Gastrocnemius medialis (tissue), 4 donors: ENCODE measurements at regions of chr1 and their contacts with region 1.

Region 1: DNA sequence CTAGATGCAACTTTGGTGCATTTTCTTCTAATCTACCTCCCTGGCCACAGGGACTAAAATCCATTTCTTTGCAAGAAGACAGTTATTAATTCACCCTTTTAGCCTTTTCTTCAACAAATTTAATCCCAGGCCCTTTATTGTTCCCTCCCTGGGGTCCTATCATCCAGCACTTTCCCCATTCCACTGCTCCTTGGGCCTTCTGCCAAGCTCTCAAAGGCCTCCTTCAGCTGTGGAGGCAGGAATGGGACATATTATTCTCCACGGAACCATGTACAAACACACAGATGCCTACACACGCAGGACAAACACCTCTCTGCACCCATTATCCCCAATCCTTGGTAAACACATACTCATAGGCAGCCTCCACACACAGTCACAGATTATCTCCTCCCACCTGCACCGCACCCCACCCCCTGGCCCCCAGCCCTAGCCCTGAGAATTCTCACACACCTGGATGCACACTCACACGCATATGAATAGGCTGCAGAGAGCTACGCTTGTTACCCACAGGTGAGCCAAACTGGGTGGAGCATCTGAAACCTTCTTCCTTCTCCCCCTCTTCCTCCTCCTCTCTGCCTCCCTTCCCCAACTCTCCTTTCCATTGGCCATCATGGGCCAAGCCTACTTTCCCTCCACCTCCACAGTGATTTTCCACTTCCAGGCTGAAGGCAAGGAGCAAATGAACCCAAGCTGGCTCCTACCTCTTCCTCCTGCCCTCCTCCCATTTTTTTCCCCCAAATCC is 11.7 kb downstream of the TAGLN2 start:
- DNase-seq: no peak
- ATAC-seq: no peak
- H3K4me3 ChIP-seq: no peak overlapping the region
- H3K27ac ChIP-seq: no peak overlapping the region
- H3K4me1 ChIP-seq: peaks cover 0 to 16% of the 10 kb centered on the region in 2 donors
- H3K27me3 ChIP-seq: no peaks in the 10 kb centered on the region
- CTCF ChIP-seq: no peak
- POLR2A ChIP-seq: no peak

Region 2: GRCh38 chr1:159891275-159892157 is 22.1 kb before region 1 on chr1:
- in situ Hi-C with region 1: no loop called
- intact Hi-C with region 1: loop called (anchors 2 kb)
- DNase-seq: peak; percentile 54 to 71
- ATAC-seq: peak; percentile 87 to 94
- H3K4me3 ChIP-seq: no peak overlapping the region
- H3K27ac ChIP-seq: no peak overlapping the region
- H3K4me1 ChIP-seq: peaks cover 3 to 13% of the 10 kb centered on the region in 2 donors
- H3K27me3 ChIP-seq: no peaks in the 10 kb centered on the region
- CTCF ChIP-seq: peak; percentile 86 to 95 (median 90)
- POLR2A ChIP-seq: no peak